ENCODE measurements at regions of chr17 and their contacts with region 1.

Region 1: GRCh38 chr17:78865682-78866390 is 25.2 kb upstream of the USP36 start:
- DNase-seq: peak in 1 of 2 donors; percentile 90
- H3K4me3 ChIP-seq: no peak overlapping the region
- H3K27ac ChIP-seq: peak overlapping the region; percentile 31 to 50
- H3K4me1 ChIP-seq: peaks cover 5 to 39% of the 10 kb centered on the region in 2 donors
- H3K27me3 ChIP-seq: no peaks in the 10 kb centered on the region
- CTCF ChIP-seq: peak; percentile 89 to 96 (median 94)

Region 2: GRCh38 chr17:78933959-78934568 is 68.2 kb after region 1 on chr17:
- intact Hi-C with region 1: loop called (anchors 1 kb)
- DNase-seq: peak; percentile 95 to 99
- H3K4me3 ChIP-seq: peak overlapping the region; percentile 17 to 38
- H3K27ac ChIP-seq: peak overlapping the region; percentile 88 to 98
- H3K4me1 ChIP-seq: peaks cover 15 to 40% of the 10 kb centered on the region in 2 donors
- H3K27me3 ChIP-seq: no peaks in the 10 kb centered on the region
- CTCF ChIP-seq: no peak

Region 3: GRCh38 chr17:78970834-78971773 is 105.3 kb after region 1 on chr17:
- intact Hi-C with region 1: loop called (anchors 1 kb)
- DNase-seq: peak; percentile 28 to 90
- H3K4me3 ChIP-seq: peak overlapping the region in 1 of 2 donors; percentile 10
- H3K27ac ChIP-seq: peak overlapping the region in 1 of 2 donors; percentile 58
- H3K4me1 ChIP-seq: peaks cover 7 to 8% of the 10 kb centered on the region in 2 donors
- H3K27me3 ChIP-seq: no peaks in the 10 kb centered on the region
- CTCF ChIP-seq: peak; percentile 86 to 93 (median 92)